Activated naive CD8-positive, alpha-beta T cell treated with anti-CD3 and anti-CD28 coated beads, Interleukin-2, amount 10 ng/mL, durations not matched to agents 7 days and 5 days (primary cell): ENCODE measurements at regions of chr5 and their contacts with region 1.

Region 1: DNA sequence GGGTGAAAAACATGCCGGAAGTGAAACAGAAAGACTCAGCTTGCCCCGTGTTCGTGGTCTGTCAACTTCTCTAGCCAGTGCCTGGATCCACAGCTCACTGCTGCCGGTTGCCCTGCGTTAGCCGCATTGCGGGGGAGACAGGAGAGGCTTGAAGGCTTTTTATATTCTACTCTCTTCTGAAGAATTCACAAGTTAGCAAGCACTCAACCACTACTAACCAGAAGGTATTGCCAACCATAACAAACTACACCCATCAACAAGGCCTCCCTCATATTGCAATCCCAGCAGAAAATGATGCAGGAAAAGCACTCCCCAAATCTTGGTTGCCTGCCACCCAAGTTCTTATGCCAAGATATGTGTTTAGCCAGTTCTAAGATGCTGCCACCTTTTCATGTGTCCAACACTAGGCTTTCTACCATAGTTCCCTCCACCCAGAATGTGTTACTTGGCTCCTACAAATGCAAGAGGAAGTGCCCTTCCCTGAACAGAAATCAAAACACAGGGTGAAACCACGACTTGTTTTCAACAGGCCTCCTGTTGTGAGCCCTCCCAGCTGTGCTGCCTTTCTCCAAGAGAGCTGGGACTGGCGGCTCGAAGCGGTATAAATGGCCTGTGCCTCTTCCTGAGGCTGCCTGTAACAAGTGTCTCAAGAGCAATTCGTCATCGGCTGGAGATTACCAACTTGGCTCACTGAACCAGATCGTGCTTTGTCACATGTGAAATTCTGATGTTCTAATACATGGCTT is 129.0 kb downstream of the SNX18 start:
- DNase-seq: peak; percentile 76
- ATAC-seq: peak; percentile 93
- H3K4me3 Mint-ChIP-seq: peak overlapping the region; percentile 75
- H3K27ac Mint-ChIP-seq: peak overlapping the region; percentile 93
- H3K4me1 Mint-ChIP-seq: peaks cover 43% of the 10 kb centered on the region
- H3K27me3 Mint-ChIP-seq: no peaks in the 10 kb centered on the region

Region 2: DNA sequence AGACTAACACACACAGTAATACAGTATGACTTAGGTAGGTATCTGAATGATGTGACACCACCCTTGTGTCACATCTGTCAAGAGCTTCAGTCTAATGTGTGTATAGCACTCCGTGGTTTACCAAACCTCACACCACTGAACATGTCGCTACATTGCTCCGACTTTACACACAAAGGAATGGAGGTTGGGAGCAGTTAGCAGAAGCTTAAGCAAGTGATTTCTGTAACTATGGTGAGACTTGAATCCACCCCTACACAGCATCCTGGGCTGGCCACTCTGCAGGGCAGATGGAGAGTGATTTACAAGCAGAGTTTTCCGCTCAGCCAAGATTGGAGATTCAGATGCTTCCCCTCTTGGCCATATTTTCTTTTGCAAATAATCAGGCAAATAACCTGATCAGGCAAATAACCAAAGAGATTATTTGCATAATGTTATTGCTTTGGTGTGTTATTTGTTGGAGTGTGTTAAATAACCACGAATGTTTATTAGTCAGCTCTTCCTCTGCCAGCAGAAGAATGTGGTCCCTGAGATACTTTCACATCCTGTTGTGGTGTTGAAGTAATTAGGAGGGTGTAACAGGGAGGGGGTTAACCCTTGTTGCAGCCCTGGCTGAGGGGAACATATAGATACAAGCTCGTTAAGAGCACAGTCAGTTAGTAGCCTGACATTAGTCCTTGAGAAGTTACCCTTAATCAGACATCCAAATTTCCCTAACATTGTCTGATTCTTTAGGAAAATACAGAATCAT is 36.2 kb before region 1 on chr5:
- POLR2A ChIA-PET with region 1: interaction called, 18 read pairs
- DNase-seq: peak; percentile 40
- ATAC-seq: peak; percentile 94
- H3K4me3 Mint-ChIP-seq: peak overlapping the region; percentile 57
- H3K27ac Mint-ChIP-seq: peak overlapping the region; percentile 83
- H3K4me1 Mint-ChIP-seq: peaks cover 19% of the 10 kb centered on the region
- H3K27me3 Mint-ChIP-seq: no peaks in the 10 kb centered on the region

Region 3: GRCh38 chr5:54680998-54681397 is 34.5 kb after region 1 on chr5:
- POLR2A ChIA-PET with region 1: no interaction called
- DNase-seq: no peak
- ATAC-seq: no peak
- H3K4me3 Mint-ChIP-seq: no peak overlapping the region
- H3K27ac Mint-ChIP-seq: no peak overlapping the region
- H3K4me1 Mint-ChIP-seq: peaks cover 7% of the 10 kb centered on the region
- H3K27me3 Mint-ChIP-seq: peaks cover 3% of the 10 kb centered on the region